SK-N-SH (cell line): ENCODE measurements at regions of chr12 and their contacts with region 1.

Region 1: DNA sequence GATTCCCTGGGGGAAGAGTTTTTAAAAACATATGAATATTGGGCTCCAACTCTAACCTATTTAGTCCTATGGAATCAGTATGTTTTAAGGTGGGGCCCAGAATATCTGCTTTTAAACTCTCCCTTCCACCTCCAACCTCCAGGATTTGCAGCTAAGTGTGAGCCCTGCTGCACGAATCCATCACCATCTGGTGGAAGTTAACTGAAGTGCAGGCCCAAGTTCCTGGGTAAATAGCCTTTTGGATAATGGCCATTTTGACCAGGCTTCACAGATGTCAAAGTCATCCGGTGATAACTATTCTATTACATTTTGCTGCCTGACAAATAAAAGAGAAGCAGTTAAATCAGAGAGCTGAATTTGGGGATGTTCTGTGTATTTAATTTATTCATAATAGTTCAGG is 58.1 kb upstream of the RMST start:
- DNase-seq: peak; percentile 61
- H3K4me3 ChIP-seq: no peak overlapping the region; a peak in 1 of 4 replicates
- H3K27ac ChIP-seq: no peak overlapping the region
- H3K4me1 ChIP-seq: no peaks in the 10 kb centered on the region
- H3K27me3 ChIP-seq: no peaks in the 10 kb centered on the region
- CTCF ChIP-seq: peak; percentile 56
- EP300 ChIP-seq: no peak
- RAD21 ChIP-seq: peak; percentile 83

Region 2: GRCh38 chr12:96786791-96787190 is 617.8 kb before region 1 on chr12:
- CTCF ChIA-PET with region 1: no interaction called
- POLR2A ChIA-PET with region 1: no interaction called
- DNase-seq: no peak
- H3K4me3 ChIP-seq: no peak overlapping the region
- H3K27ac ChIP-seq: no peak overlapping the region
- H3K4me1 ChIP-seq: no peaks in the 10 kb centered on the region
- H3K27me3 ChIP-seq: no peaks in the 10 kb centered on the region
- CTCF ChIP-seq: no peak
- EP300 ChIP-seq: no peak
- RAD21 ChIP-seq: no peak

Region 3: DNA sequence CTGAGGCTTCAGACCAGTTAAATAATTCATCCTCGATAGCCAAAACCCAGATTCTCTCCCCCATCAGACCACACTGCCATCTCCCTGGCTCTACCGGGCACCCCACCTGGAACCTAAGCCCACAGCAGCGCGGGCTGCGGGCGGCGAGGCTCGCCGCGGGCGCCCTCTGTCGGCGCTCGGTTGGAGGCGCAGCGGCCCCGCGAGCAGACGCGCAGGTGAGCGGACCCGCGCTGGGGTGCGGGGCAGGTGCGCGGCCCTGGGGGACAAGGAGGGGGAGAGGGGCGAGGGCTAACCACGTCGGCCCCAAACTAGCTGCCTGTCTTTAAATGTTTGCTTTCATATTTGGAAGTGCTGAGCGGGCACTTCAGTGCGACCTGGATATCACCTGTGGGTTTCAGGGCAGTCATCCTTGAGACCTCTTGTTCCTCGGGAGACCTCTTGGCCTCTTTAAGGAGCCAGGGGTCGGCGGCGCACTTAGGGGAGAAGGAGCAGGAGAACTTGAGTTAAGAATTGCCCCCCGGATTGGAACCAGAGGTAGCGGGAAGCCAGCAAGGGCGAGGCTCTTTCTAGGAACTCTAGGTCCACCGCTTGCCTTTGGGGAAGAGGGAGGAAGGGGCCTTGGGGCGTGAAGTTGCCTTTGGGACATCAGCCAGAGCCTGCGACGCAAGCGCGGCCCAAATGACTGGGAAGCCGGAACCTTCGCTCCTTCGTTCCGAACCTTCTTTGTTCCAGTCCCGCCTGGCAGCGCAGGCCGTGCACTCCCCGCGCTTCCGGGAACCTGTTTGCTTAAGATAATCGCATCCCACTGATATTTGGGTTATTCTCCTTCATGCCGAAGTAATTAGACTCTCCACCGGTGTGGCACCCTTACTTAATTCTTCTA is 418.8 kb before region 1 on chr12:
- CTCF ChIA-PET with region 1: interaction called, 18 read pairs
- POLR2A ChIA-PET with region 1: no interaction called
- DNase-seq: no peak
- H3K4me3 ChIP-seq: no peak overlapping the region; a peak in 1 of 4 replicates
- H3K27ac ChIP-seq: no peak overlapping the region
- H3K4me1 ChIP-seq: no peaks in the 10 kb centered on the region
- H3K27me3 ChIP-seq: no peaks in the 10 kb centered on the region
- CTCF ChIP-seq: no peak
- EP300 ChIP-seq: no peak
- RAD21 ChIP-seq: no peak

Region 4: DNA sequence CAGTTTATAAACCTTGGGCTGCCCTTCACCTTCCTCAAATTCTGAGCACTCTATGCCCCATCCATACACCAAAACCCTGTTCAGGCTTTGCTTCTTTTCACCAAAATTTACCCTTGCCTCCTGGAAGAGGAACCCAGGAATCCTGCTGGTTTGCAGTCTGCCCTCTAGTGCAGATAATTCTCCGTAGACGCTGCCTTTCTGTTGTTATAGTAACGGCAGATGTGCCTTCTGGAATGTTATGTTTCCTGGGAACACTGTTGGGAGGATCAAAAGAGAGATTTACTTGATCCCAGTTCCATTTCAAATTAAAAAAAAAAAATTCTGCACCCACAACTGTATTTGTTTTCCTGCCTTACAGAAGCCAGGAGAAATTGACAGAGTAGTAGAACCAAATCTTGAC is 46.2 kb before region 1 on chr12:
- CTCF ChIA-PET with region 1: no interaction called
- POLR2A ChIA-PET with region 1: no interaction called
- DNase-seq: no peak
- H3K4me3 ChIP-seq: no peak overlapping the region
- H3K27ac ChIP-seq: no peak overlapping the region
- H3K4me1 ChIP-seq: no peaks in the 10 kb centered on the region
- H3K27me3 ChIP-seq: no peaks in the 10 kb centered on the region
- CTCF ChIP-seq: no peak
- EP300 ChIP-seq: no peak
- RAD21 ChIP-seq: no peak

Region 5: DNA sequence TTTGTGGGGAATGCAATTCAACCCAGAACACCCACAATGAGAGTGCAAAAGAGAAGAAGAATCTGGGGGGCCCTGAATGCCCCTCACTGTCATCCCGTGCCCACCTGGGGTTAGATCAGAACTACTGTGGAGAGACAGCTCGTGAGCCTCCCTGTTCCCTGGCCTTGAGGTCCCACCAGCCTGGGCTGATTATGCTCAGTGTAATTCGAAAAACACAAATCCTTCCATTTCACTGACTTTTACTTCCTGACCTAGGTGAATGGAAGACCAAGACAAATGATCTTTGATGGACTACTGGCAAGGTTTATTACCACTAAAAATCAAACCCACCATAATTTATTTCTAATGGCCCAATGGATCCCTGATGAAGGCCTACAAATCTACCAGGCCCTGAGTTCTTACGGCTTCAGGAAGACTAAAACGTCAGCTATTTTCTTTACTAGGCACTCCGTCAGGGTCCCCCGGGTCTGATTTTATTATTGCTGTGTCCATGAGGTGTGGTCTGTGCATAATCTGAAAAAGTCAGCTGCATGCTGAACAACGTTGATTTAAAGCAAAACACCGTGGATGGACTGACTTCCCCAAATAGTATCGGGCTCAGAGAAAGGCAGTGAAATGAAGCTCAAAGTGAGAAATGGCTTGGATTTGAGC is 13.2 kb after region 1 on chr12:
- CTCF ChIA-PET with region 1: interaction called, 14 read pairs
- POLR2A ChIA-PET with region 1: no interaction called
- DNase-seq: no peak
- H3K4me3 ChIP-seq: no peak overlapping the region
- H3K27ac ChIP-seq: no peak overlapping the region
- H3K4me1 ChIP-seq: no peaks in the 10 kb centered on the region
- H3K27me3 ChIP-seq: no peaks in the 10 kb centered on the region
- CTCF ChIP-seq: no peak
- EP300 ChIP-seq: no peak
- RAD21 ChIP-seq: no peak